Activated T-helper 1 cell treated with anti-CD3 and anti-CD28 coated beads, Interleukin-12 subunit alpha, Interleukin-12 subunit beta, Interleukin-2, Interleukin-4 antibody, amounts not matched to agents 30 ng/mL and 10 ng/mL and 1 ng/mL, durations not matched to agents 14 hours and 24 hours and 36 hours (primary cell): ENCODE measurements at regions of chr11 and their contacts with region 1.

Region 1: DNA sequence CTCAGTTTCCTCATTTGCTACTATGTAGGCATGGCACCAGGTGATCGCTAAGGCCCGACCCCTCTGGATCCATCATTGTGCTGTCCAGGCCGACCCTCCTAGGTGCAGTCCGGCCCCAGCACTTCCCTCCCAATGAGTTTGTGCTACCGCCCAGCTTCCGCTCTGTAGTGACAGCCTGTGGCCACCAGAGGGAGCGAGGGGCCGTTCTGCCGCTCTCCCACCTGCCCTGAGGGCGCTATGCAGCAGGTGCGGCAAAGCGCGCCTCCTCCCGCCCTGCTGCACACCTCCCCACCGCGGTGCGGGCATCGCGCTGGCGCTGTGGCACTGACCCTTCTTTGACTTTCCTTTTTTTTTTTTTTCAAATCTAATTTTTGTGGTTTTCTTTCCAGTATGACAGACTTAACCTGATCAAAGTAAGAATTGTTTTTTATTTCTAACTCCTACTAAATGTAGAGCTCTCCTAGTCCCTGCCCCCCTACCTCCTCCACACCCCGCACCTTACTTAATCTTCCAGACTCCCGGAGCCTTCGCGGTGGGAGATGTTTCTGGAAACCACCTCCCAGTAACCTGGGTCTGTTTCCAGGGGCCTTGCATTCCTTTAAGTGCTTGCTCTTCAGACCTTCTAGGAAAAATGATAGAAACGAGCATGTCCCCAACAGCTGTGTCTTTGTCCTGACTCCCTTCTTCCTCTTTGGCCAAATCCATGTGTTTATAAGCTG is 73.7 kb downstream of the SCN3B start:
- DNase-seq: peak; percentile 57
- H3K4me3 Mint-ChIP-seq: no peak overlapping the region
- H3K27ac Mint-ChIP-seq: peak overlapping the region; percentile 29
- H3K4me1 Mint-ChIP-seq: peaks cover 23% of the 10 kb centered on the region
- H3K27me3 Mint-ChIP-seq: no peaks in the 10 kb centered on the region

Region 2: DNA sequence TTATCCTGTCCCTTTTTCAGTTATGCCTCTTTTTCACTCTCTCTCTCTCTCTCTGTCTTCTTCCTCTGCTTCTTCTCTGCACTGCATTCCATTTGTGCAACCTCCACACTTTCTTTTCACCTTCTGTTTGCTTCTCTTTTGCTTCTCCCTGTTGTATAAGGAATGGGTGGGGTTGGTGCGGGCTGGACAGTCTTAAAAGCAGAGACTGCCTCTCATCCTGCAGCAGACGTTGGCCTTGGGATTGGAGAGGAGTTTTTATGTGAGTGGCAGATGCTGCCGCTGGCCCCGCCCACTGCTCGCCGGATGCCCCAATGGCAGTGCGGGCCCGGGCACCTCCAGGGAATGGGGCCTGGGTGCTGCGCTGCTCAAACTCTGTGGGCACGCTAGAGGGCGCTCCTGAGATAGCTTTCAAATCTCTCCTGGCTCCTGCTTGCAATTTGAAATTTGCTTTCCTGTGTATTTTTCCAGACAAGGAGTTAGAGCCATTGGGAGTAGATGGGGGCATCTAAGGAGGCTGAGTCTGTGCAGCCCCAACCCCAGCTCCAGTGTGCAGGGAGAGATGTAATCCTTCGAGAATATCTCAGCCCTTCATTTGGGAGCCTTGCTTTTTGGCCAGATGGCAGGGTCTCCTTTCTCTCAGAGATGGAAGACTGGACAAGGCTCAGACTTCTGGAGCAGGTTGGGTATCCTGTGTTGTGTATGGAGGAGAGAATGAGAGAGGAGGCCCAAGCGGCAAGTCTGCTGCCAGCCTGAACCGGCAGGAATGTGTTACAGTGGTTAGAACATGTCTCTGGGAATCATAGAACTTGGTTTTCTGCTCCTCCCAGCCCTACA is 69.5 kb before region 1 on chr11:
- intact Hi-C with region 1: loop called (anchors 2 kb)
- DNase-seq: peak; percentile 56
- H3K4me3 Mint-ChIP-seq: no peak overlapping the region
- H3K27ac Mint-ChIP-seq: peak overlapping the region; percentile 73
- H3K4me1 Mint-ChIP-seq: peaks cover 57% of the 10 kb centered on the region
- H3K27me3 Mint-ChIP-seq: no peaks in the 10 kb centered on the region

Region 3: DNA sequence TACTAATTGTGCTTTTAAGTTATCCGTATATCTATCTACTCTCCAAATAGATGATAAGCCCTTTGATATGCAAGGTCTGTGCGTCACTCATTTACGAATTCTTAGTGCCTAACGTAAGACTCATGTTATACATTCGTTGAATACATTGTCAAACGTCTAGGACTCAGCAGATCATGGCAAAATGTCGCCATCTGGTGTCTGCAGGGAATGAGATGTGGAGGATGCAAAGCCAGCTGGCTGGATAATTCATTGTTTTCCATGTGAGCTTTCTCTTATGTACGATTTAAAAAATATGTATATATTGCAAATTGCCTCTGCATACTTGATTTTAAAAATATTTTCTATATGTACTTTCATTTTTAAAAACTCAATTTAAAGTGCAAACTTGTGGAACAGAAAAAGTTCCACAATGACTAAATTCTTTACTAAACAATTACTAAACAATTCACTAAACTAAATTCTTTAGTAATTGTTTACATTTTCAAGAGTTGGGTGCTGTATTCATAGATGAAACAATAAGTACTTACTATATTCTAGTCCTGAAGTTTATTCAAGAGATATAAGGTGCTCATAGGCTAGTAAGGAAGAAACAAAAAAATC is 127.0 kb after region 1 on chr11:
- intact Hi-C with region 1: loop called (anchors 1 kb)
- DNase-seq: peak; percentile 38
- H3K4me3 Mint-ChIP-seq: no peak overlapping the region
- H3K27ac Mint-ChIP-seq: no peak overlapping the region
- H3K4me1 Mint-ChIP-seq: no peaks in the 10 kb centered on the region
- H3K27me3 Mint-ChIP-seq: peaks cover 20% of the 10 kb centered on the region